GM12878 (cell line): ENCODE measurements at regions of chr2 and their contacts with region 1.

Region 1: DNA sequence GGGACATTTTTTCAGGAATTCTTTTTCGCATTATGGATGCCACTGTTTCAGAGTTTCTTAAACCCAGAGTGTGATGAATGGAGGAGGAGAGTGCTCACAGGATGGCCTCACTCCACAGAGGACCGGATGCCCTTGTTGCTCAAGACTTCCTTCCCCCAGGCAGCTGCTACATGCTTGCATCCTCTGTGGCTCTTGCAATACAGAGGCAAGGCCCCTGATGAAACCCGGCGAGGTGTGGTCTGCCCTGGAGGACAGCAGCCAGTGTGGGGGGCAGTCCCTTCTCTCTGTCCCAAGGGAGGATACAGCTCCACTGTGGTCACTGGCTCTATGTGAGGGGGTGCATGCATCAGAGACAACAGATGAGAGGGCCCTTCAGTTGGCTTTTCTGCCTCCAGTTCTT is 109.6 kb downstream of the SH3RF3 start:
- DNase-seq: peak; percentile 59
- ATAC-seq: peak; percentile 97
- H3K4me3 ChIP-seq: no peak overlapping the region
- H3K27ac ChIP-seq: no peak overlapping the region
- H3K4me1 ChIP-seq: peaks cover 11% of the 10 kb centered on the region
- H3K27me3 ChIP-seq: no peaks in the 10 kb centered on the region
- CTCF ChIP-seq: no peak
- EP300 ChIP-seq: peak; percentile 15 to 42; a peak in 2 of 4 replicates
- POLR2A ChIP-seq: no peak
- RAD21 ChIP-seq: peak; percentile 15; the same call in 1 of the 2 replicates

Region 2: GRCh38 chr2:109173311-109174171 is 65.0 kb before region 1 on chr2:
- CTCF ChIA-PET with region 1: no interaction called
- POLR2A ChIA-PET with region 1: no interaction called
- RAD21 ChIA-PET with region 1: no interaction called
- SMC1A ChIA-PET with region 1: no interaction called
- in situ Hi-C with region 1: no loop called
- intact Hi-C with region 1: no loop called
- DNase-seq: no peak
- ATAC-seq: no peak
- H3K4me3 ChIP-seq: no peak overlapping the region
- H3K27ac ChIP-seq: no peak overlapping the region
- H3K4me1 ChIP-seq: no peaks in the 10 kb centered on the region
- H3K27me3 ChIP-seq: no peaks in the 10 kb centered on the region; a peak in 1 of 4 replicates
- CTCF ChIP-seq: no peak
- EP300 ChIP-seq: no peak
- POLR2A ChIP-seq: no peak
- RAD21 ChIP-seq: no peak

Region 3: DNA sequence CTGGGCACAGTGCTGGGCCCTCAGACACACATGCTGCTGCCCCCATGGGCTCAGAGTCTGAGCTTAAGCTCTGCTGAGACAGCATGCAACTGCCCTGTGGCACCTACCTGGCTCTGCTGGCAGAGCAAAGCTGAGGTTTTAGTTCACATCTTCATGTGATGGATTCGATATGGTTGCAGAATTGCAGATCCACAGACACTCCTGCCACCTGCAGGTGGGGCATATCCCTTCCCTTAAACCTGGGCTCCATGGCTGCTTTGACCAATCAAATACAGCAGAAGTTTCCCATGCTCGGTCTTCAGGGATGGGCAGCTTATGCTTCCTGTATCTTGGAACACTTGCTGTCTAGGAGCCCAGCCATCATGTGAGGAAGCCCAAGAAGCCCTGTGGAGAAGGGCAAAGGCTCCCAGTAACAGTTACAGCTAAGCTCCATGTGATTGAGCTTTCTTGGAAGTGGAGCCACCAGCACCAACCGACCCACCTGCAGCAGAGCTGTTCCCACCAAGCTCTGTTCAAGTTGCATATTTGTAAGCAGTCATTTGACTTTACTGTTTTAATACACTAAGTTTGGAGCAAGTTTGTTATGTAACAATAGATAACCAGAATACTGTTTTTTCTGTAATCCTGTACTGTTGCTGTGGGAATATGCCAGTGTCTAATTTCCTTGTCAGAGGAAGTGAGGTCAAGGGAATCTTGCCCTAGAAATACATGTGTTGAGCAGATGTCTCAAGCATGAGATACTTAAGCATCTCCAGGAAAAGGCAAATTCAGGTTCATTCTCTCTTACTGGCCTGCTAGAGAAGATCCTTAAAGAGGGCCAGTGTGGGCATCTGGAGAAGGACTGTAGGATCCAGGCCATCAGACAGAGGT is 30.3 kb before region 1 on chr2:
- CTCF ChIA-PET with region 1: interaction called, 3 read pairs
- POLR2A ChIA-PET with region 1: interaction called, 3 read pairs
- RAD21 ChIA-PET with region 1: interaction called, 15 read pairs
- SMC1A ChIA-PET with region 1: interaction called, 26 read pairs
- in situ Hi-C with region 1: no loop called
- intact Hi-C with region 1: no loop called
- DNase-seq: no peak
- ATAC-seq: peak; percentile 49
- H3K4me3 ChIP-seq: no peak overlapping the region
- H3K27ac ChIP-seq: no peak overlapping the region
- H3K4me1 ChIP-seq: peaks cover 5% of the 10 kb centered on the region
- H3K27me3 ChIP-seq: no peaks in the 10 kb centered on the region; a peak in 1 of 4 replicates
- CTCF ChIP-seq: peak; percentile 9 to 37 (median 36); a peak in 3 of 6 replicates
- EP300 ChIP-seq: no peak
- POLR2A ChIP-seq: no peak
- RAD21 ChIP-seq: peak; percentile 45

Region 4: DNA sequence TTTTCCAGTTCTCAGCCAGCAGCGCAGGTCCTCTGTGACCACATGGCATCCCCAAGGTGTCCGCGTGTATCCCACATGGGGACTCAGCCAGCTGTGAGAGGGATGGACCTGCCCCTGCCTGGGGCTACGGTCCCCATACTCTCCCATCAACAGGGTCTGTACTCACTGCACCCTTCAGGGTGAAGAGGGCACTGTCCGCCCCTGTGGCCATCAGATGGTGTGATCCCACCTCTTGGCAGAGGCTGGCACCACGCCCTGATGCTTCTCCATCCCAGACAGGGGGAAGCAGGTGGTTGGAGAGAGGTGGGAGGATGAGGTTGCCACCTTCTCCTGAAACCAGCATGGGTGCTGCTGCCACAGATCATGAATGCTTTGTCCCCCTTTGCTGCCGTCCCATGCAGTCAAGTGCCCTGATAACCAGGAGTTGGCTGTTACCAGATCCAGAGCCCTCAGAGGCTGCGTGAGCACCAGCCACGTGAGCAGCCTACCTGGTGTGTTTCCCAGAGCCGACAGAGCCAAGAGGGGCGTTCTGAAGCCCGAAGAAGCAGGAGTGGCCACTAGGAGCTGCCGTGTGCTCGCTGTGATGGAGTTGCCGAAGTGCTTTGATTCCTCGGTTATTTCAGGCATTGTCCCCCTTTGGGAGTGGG is 15.6 kb before region 1 on chr2:
- CTCF ChIA-PET with region 1: interaction called, 13 read pairs
- POLR2A ChIA-PET with region 1: interaction called, 8 read pairs
- RAD21 ChIA-PET with region 1: interaction called, 30 read pairs
- SMC1A ChIA-PET with region 1: interaction called, 44 read pairs
- in situ Hi-C with region 1: no loop called
- intact Hi-C with region 1: no loop called
- DNase-seq: no peak
- ATAC-seq: no peak
- H3K4me3 ChIP-seq: no peak overlapping the region
- H3K27ac ChIP-seq: no peak overlapping the region
- H3K4me1 ChIP-seq: peaks cover 18% of the 10 kb centered on the region
- H3K27me3 ChIP-seq: no peaks in the 10 kb centered on the region
- CTCF ChIP-seq: no peak
- EP300 ChIP-seq: no peak
- POLR2A ChIP-seq: no peak
- RAD21 ChIP-seq: no peak

Region 5: DNA sequence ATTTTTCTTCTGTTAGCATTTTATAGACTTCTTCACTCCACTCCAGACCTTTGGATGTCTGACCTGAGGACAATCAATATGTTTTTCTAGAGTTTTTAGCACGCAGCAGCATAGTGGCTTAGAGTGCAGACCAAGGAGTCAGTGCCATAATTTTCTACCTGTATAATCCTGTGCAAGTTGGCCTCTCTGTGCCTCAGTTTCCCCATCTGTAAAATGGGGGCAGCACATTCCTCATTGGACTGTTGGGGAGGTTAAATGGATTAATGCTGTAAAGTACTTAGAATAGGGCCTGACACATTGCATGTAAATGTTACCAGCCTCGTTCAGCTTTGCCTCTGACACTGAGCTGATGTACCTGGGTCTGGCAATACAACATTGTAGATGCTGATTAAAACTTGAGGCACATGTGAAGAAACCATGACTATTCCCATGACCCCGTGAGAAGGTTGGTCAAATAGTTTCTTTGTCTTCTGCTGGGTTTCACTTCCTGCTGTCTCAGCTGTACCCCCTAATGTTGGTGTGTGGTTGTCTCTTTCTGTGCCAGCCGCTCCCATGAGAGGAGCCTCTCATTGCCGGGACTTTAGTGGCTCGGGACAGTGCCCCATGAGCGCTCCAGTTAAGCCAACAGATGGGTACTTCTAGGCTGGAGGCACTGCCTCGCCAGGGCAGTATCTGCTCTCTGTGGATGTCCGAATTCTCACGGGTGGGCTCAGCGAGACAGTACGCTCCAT is 15.8 kb after region 1 on chr2:
- CTCF ChIA-PET with region 1: interaction called, 6 read pairs
- POLR2A ChIA-PET with region 1: interaction called, 8 read pairs
- RAD21 ChIA-PET with region 1: interaction called, 26 read pairs
- SMC1A ChIA-PET with region 1: interaction called, 76 read pairs
- in situ Hi-C with region 1: no loop called
- intact Hi-C with region 1: no loop called
- DNase-seq: peak; percentile 94
- ATAC-seq: peak; percentile 84
- H3K4me3 ChIP-seq: no peak overlapping the region
- H3K27ac ChIP-seq: peak overlapping the region; percentile 62
- H3K4me1 ChIP-seq: peaks cover 29% of the 10 kb centered on the region
- H3K27me3 ChIP-seq: no peaks in the 10 kb centered on the region
- CTCF ChIP-seq: no peak
- EP300 ChIP-seq: peak; percentile 23 to 27; a peak in 1 of 4 replicates
- POLR2A ChIP-seq: no peak
- RAD21 ChIP-seq: no peak

Region 6: DNA sequence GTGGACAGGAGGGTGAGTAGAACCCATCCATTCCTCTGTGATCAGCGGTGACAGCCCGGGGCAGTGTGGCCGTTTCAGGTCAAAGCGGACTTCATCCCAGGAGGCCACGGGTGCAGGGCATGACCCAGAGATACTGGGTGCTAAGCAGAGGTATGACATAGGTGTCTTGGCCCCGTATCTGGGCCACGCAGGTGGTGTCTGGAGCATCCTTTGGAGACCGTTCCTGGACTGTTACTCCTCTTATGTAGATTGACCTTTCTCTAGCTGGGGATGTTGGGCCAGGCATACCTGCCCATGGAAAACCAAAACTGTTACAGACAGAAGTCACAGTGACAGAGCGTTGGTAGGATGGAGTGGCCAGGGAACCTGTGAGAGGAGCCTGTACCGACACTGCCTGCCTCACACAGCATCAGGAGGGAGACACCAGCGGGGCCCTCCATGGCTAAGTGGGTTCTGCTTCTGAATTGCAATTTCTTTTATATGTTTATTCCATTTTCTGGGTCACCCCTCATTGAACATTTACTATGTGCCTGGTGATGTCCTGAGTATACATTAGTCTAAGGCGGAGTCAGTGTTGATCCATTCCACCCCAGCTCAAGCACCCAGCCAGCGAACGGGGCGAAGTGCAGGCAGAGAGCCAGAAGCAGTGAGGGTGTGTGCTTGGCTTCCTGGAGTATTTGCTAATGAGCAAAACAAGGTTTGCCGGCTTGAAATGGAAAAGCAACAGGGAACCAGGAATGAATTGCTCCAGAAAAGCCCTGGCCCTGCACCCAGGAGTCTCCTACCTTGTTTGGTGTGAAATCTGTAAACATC is 32.1 kb after region 1 on chr2:
- CTCF ChIA-PET with region 1: no interaction called
- POLR2A ChIA-PET with region 1: no interaction called
- RAD21 ChIA-PET with region 1: no interaction called
- SMC1A ChIA-PET with region 1: no interaction called
- in situ Hi-C with region 1: no loop called
- intact Hi-C with region 1: no loop called
- DNase-seq: no peak
- ATAC-seq: no peak
- H3K4me3 ChIP-seq: no peak overlapping the region
- H3K27ac ChIP-seq: no peak overlapping the region
- H3K4me1 ChIP-seq: no peaks in the 10 kb centered on the region
- H3K27me3 ChIP-seq: no peaks in the 10 kb centered on the region
- CTCF ChIP-seq: no peak
- EP300 ChIP-seq: no peak
- POLR2A ChIP-seq: no peak
- RAD21 ChIP-seq: no peak